Activated T-helper 2 cell treated with anti-CD3 and anti-CD28 coated beads, Interferon-gamma antibody, Interleukin-2, Interleukin-4, amounts not matched to agents 10 μg/mL and 5 μg/mL and 100 μg/mL, durations not matched to agents 14 hours and 24 hours and 36 hours (primary cell): ENCODE measurements at regions of chr3 and their contacts with region 1.

Region 1: GRCh38 chr3:149120051-149120972 is 9.1 kb upstream of the HPS3 start:
- DNase-seq: no peak
- H3K4me3 Mint-ChIP-seq: no peak overlapping the region
- H3K27ac Mint-ChIP-seq: no peak overlapping the region
- H3K4me1 Mint-ChIP-seq: peaks cover 3% of the 10 kb centered on the region
- H3K27me3 Mint-ChIP-seq: peaks cover 10% of the 10 kb centered on the region

Region 2: DNA sequence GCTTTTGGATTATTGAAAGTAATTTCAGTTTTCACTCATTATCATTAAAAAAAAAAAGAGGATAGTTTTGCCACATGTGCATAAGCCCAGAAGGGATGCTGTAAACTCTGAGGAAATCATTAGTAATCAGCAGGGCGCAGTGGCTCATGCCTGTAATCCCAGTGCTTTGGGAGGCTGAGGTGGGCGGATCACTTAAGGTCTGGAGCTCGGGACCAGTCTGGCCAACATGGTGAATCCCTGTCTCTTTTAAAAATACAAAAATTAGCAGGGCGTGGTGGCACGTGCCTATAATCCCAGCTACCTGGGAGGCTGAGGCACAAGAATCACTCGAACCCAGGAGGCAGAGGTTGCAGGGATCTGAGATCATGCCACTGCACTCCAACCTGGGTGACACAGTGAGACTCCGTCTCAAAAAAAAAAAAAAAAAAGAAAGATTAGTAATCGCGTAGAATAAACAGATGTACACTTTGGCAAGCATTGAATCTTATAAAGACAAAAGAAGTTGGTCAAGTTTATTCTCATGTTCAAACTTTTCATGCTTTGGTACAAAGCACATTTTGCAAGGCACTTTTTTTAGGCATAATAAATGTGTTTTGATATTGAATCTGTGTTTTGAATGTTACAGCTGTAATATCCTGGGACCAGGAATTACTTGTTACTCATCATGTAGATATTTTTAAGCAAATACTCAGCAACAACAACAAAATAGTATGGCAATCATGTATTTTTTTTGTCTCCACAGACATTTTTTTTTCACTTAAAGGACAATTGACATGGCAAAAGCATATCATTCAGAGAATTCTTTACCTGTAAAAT is 515.8 kb before region 1 on chr3:
- intact Hi-C with region 1: no loop called
- DNase-seq: no peak
- H3K4me3 Mint-ChIP-seq: no peak overlapping the region
- H3K27ac Mint-ChIP-seq: no peak overlapping the region
- H3K4me1 Mint-ChIP-seq: no peaks in the 10 kb centered on the region
- H3K27me3 Mint-ChIP-seq: no peaks in the 10 kb centered on the region

Region 3: DNA sequence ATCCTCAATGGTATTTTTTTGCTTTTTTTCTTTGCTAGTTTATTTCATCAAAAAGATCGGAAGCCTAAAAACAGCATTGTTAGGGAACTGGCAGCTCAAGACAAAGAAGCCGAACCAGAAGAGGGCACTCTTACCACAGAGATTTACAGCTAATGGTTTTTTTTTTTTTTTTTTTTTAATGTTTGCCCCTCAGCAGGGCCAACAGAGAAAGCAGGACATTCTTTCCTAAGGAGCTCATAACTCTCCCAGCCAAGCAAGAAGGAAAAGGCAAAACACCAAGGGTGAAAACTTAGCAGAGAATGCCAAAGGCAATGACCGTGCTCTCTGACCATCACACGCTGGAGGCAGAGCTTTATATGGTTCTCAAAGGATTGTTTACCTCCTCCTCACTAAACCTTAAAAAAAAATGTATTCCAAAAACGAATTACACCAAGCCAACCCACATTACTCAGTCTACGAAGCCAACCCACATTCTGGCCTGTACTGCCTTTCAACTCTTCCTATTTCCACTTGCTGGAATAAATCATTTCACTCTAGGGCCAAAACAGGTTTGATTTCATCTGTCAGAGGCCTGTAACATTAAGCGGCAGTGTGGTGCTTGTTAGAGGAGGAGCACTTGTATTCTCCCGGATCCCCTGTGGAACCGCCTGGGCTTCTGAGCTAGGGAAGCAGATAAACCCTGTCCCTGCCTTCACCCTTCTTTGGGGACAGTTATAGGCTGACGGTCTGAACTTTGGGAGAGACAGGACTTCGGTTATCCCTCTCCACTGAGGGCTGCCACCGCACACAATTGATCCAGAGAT is 164.6 kb before region 1 on chr3:
- intact Hi-C with region 1: loop called (anchors 2 kb)
- DNase-seq: no peak
- H3K4me3 Mint-ChIP-seq: no peak overlapping the region
- H3K27ac Mint-ChIP-seq: no peak overlapping the region
- H3K4me1 Mint-ChIP-seq: peaks cover 10% of the 10 kb centered on the region
- H3K27me3 Mint-ChIP-seq: peaks cover 11% of the 10 kb centered on the region

Region 4: GRCh38 chr3:149152420-149152819 is 32.1 kb after region 1 on chr3:
- intact Hi-C with region 1: no loop called
- DNase-seq: no peak
- H3K4me3 Mint-ChIP-seq: no peak overlapping the region
- H3K27ac Mint-ChIP-seq: no peak overlapping the region
- H3K4me1 Mint-ChIP-seq: peaks cover 18% of the 10 kb centered on the region
- H3K27me3 Mint-ChIP-seq: no peaks in the 10 kb centered on the region

Region 5: DNA sequence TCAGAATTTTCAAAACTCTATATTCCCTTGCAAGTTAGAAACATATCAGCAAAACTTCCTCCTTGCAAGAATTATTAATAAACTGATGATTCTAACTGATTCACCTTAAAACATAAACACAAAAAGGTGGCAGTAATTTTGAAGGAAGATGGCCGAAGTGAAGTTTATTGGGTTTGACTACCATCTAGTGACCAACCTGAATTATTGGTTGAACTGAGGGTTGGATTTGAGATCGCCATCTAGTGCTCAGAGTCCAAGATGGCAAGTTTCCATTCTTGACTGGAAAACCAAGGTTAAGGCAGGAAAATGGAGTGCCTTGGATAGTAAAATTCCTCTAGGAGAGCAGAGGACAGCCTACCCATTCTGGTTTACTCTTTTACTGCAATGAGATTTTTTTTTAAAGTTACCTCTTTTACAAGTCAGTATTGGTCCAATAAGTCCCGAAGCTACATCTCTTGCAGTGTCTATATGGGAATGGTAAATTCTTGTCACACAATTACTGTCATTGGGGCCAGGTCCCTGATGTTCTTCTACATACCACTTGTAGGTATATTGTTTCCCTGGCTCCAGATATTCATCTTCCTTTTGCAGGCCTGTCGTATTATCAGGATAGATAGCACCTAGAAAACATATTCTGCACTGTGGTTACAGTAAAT is 152.9 kb after region 1 on chr3:
- intact Hi-C with region 1: loop called (anchors 1 kb)
- DNase-seq: no peak
- H3K4me3 Mint-ChIP-seq: no peak overlapping the region
- H3K27ac Mint-ChIP-seq: no peak overlapping the region
- H3K4me1 Mint-ChIP-seq: peaks cover 20% of the 10 kb centered on the region
- H3K27me3 Mint-ChIP-seq: peaks cover 15% of the 10 kb centered on the region

Region 6: GRCh38 chr3:149393345-149394160 is 273.2 kb after region 1 on chr3:
- intact Hi-C with region 1: loop called (anchors 2 kb)
- DNase-seq: no peak
- H3K4me3 Mint-ChIP-seq: no peak overlapping the region
- H3K27ac Mint-ChIP-seq: no peak overlapping the region
- H3K4me1 Mint-ChIP-seq: no peaks in the 10 kb centered on the region
- H3K27me3 Mint-ChIP-seq: no peaks in the 10 kb centered on the region

Region 7: DNA sequence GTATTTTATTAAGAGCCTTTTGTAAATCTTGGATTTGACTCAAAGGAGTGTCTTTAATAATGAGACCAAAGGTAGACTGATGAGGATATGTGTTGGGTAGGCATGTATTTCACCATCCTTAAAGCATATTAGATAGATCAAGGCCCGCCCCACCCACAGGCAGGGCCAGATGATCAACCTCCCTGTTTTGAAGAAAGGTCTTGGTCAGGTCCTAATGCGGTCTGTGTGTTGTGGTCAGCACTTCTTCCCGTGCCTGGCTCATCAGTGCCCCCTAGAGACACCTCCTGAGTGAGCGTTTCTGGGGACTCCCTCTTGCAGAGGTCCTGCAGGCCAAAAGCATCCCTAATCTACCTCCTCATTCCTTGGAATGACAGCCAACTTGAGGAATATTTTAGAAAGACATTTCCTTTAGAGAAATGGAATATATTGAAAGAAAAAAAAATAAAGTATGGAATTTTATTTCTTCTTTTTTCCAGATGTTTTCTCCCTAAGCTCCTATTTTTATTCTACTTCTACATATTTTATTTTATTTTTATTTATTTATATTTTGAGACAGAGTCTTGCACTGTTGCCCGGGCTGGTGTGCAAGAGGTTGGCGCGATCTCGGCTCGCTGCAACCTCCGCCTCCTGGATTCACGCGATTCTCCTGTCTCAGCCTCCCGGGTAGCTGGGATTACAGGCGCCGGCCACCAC is 360.2 kb after region 1 on chr3:
- intact Hi-C with region 1: loop called (anchors 2 kb)
- DNase-seq: peak; percentile 17
- H3K4me3 Mint-ChIP-seq: no peak overlapping the region
- H3K27ac Mint-ChIP-seq: no peak overlapping the region
- H3K4me1 Mint-ChIP-seq: no peaks in the 10 kb centered on the region
- H3K27me3 Mint-ChIP-seq: peaks cover 2% of the 10 kb centered on the region